Naive thymus-derived CD4-positive, alpha-beta T cell (primary cell): ENCODE measurements at regions of chr7 and their contacts with region 1.

Region 1: DNA sequence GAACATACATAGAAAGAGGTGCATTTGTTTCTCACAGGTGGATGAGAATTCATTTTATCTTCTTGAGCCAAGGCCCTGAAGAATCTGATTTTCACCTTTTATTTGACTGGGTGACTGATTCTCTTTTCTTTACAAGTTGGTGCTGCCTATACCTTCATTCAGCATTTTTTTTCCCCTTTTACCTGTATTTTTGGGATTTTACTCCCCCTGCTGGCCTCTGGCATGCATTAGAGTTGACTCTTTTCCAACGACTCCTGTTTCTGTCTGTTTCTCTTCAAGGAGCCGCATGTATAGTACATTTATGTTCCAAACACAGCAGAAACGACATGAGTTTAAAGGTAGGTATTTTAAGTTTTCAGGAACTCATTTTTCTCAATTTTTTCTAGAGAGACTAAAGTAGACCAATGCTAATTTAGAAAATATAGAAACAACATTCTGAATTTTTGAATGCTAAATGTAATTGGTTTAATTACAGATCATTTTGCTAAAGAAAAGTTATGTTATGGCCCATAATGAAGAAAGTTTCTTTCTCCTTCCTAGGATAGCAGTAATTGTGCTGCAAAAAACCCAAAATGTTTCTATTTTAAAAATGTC is 149.8 kb upstream of the HDAC9 start:
- DNase-seq: peak in 5 of 9 donors; percentile 8 to 43 (median 30)
- ATAC-seq: no peak
- H3K4me3 ChIP-seq: no peak overlapping the region
- H3K4me3 Mint-ChIP-seq: no peak overlapping the region
- H3K27ac ChIP-seq: no peak overlapping the region
- H3K27ac Mint-ChIP-seq: no peak overlapping the region
- H3K4me1 ChIP-seq: no peaks in the 10 kb centered on the region
- H3K4me1 Mint-ChIP-seq: no peaks in the 10 kb centered on the region
- H3K27me3 ChIP-seq: no peaks in the 10 kb centered on the region
- H3K27me3 Mint-ChIP-seq: peaks cover 3 to 12% (median 7%) of the 10 kb centered on the region in 5 donors

Region 2: GRCh38 chr7:16891338-16891737 is 1454.4 kb before region 1 on chr7:
- CTCF ChIA-PET with region 1: no interaction called
- POLR2A ChIA-PET with region 1: no interaction called
- intact Hi-C with region 1: loop called in 1 of 2 experiments (anchors 1 kb)
- DNase-seq: peak in 6 of 9 donors; percentile 1 to 35 (median 28)
- ATAC-seq: peak; percentile 63
- H3K4me3 ChIP-seq: no peak overlapping the region
- H3K4me3 Mint-ChIP-seq: peak overlapping the region in 1 of 10 donors; percentile 6
- H3K27ac ChIP-seq: no peak overlapping the region
- H3K27ac Mint-ChIP-seq: no peak overlapping the region
- H3K4me1 ChIP-seq: no peaks in the 10 kb centered on the region
- H3K4me1 Mint-ChIP-seq: peaks cover 0 to 11% (median 0%) of the 10 kb centered on the region in 7 donors
- H3K27me3 ChIP-seq: no peaks in the 10 kb centered on the region
- H3K27me3 Mint-ChIP-seq: peaks cover 0 to 8% (median 2%) of the 10 kb centered on the region in 5 donors

Region 3: GRCh38 chr7:17680943-17681351 is 664.8 kb before region 1 on chr7:
- CTCF ChIA-PET with region 1: interaction called, 8 read pairs
- POLR2A ChIA-PET with region 1: no interaction called
- intact Hi-C with region 1: loop called (anchors 1 kb)
- DNase-seq: peak in 4 of 9 donors; percentile 12 to 35 (median 18)
- ATAC-seq: no peak
- H3K4me3 ChIP-seq: no peak overlapping the region
- H3K4me3 Mint-ChIP-seq: no peak overlapping the region
- H3K27ac ChIP-seq: no peak overlapping the region
- H3K27ac Mint-ChIP-seq: no peak overlapping the region
- H3K4me1 ChIP-seq: no peaks in the 10 kb centered on the region
- H3K4me1 Mint-ChIP-seq: no peaks in the 10 kb centered on the region
- H3K27me3 ChIP-seq: no peaks in the 10 kb centered on the region
- H3K27me3 Mint-ChIP-seq: peaks cover 0 to 2% (median 0%) of the 10 kb centered on the region in 5 donors

Region 4: DNA sequence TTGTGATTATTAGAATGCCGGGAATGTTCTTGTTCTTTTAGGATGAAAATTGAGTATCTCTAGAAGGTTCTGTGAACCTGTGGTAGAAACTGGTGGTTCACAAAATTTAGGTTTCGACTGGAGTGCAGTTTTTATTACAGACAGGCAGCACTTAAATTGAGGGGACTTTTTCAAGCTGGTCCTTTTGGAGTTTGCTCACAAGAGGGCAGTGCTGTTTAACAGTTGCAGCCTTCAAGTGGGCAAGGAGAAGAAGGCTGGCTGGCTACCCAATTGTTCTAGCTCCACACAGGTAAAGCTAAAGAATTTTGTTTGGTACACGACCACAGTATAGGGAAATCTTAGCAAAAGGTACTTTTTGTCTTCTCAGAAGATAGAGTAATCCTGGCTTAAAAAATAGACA is 639.0 kb before region 1 on chr7:
- CTCF ChIA-PET with region 1: no interaction called
- POLR2A ChIA-PET with region 1: no interaction called
- intact Hi-C with region 1: loop called in 1 of 2 experiments (anchors 1 kb)
- DNase-seq: peak in 5 of 9 donors; percentile 5 to 15 (median 8)
- ATAC-seq: peak; percentile 54
- H3K4me3 ChIP-seq: no peak overlapping the region
- H3K4me3 Mint-ChIP-seq: no peak overlapping the region
- H3K27ac ChIP-seq: no peak overlapping the region
- H3K27ac Mint-ChIP-seq: no peak overlapping the region
- H3K4me1 ChIP-seq: no peaks in the 10 kb centered on the region
- H3K4me1 Mint-ChIP-seq: no peaks in the 10 kb centered on the region
- H3K27me3 ChIP-seq: no peaks in the 10 kb centered on the region
- H3K27me3 Mint-ChIP-seq: peaks cover 0 to 16% (median 2%) of the 10 kb centered on the region in 5 donors

Region 5: DNA sequence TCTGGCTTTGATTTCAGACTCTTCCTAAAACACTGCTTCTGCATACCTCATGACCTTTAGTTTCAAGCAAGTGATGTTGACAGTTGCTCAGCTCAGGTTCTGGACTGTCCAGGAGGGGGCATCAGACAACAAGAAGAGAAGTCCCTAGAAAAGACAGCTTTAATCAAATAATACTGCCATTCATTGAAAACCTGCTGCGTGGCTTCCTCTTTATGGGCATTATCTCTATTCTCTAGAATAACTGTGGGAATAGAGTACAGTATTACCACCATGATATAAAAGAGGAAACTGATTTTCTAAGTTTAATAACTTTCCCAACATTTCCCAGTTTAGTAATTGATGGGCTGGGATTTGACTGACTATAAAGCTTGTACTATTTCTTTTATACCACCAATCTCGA is 575.8 kb before region 1 on chr7:
- CTCF ChIA-PET with region 1: interaction called, 9 read pairs
- POLR2A ChIA-PET with region 1: no interaction called
- intact Hi-C with region 1: loop called (anchors 1 kb)
- DNase-seq: peak in 8 of 9 donors; percentile 4 to 47 (median 30)
- ATAC-seq: peak; percentile 70
- H3K4me3 ChIP-seq: no peak overlapping the region
- H3K4me3 Mint-ChIP-seq: no peak overlapping the region
- H3K27ac ChIP-seq: no peak overlapping the region
- H3K27ac Mint-ChIP-seq: no peak overlapping the region
- H3K4me1 ChIP-seq: no peaks in the 10 kb centered on the region
- H3K4me1 Mint-ChIP-seq: peaks cover 0 to 4% (median 0%) of the 10 kb centered on the region in 7 donors
- H3K27me3 ChIP-seq: no peaks in the 10 kb centered on the region
- H3K27me3 Mint-ChIP-seq: no peaks in the 10 kb centered on the region